Uterus (tissue), 4 donors: ENCODE measurements at regions of chr9 and their contacts with region 1.

Region 1: GRCh38 chr9:119941091-119941490 is 571.9 kb upstream of the BRINP1 start:
- DNase-seq: no peak
- H3K4me3 ChIP-seq: no peak overlapping the region
- H3K27ac ChIP-seq: no peak overlapping the region
- H3K4me1 ChIP-seq: no peaks in the 10 kb centered on the region
- H3K27me3 ChIP-seq: no peaks in the 10 kb centered on the region
- CTCF ChIP-seq: no peak
- POLR2A ChIP-seq: no peak

Region 2: DNA sequence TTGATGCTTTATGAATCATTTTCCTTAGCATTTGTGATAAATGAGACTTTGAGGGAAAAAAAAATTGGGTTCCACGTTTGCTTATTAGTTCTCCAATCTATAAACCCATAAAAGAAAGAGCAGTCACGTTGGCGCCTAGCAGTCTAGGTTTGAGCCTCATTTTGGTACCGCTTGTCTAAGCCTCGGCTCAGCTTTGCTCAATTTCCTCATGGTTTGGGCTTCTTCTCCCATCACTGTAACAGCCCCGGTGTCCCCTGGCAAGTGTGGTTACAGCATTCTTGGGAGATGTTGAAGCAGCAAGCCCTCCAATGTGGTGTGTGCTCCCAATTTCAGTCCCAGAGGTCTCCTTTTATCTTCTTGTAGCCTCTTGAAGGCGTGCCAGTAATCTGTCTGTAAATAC is 60.4 kb after region 1 on chr9:
- intact Hi-C with region 1: loop called (anchors 10 kb)
- DNase-seq: no peak
- H3K4me3 ChIP-seq: no peak overlapping the region
- H3K27ac ChIP-seq: no peak overlapping the region
- H3K4me1 ChIP-seq: no peaks in the 10 kb centered on the region
- H3K27me3 ChIP-seq: no peaks in the 10 kb centered on the region
- CTCF ChIP-seq: no peak
- POLR2A ChIP-seq: no peak